Psoas muscle (tissue), 8 donors: ENCODE measurements at regions of chr3 and their contacts with region 1.

Region 1: DNA sequence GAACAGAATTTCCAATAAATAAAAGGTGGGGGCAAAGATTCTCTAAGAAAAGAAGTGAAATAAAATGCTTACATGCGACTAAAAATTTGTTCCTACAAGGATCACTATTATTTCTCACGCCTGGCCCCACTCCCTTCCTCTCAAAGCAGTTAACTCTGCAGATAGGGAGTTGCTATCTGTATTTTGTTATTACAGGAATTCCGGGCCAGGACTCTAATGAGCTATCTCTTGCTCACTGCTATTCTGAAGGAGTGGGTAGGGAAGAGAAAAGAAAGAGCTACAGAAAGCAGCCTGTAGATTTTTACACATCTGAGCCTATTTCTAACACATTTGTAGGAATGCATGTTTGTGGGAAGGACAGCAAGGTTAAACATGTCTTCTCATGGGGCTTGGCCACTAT is 140.4 kb downstream of the PCCB start:
- DNase-seq: no peak
- ATAC-seq: no peak
- H3K4me3 ChIP-seq: no peak overlapping the region
- H3K27ac ChIP-seq: no peak overlapping the region
- H3K4me1 ChIP-seq: no peaks in the 10 kb centered on the region
- H3K27me3 ChIP-seq: no peaks in the 10 kb centered on the region
- CTCF ChIP-seq: no peak

Region 2: GRCh38 chr3:136075218-136075808 is 315.3 kb before region 1 on chr3:
- intact Hi-C with region 1: loop called in 1 of 2 experiments (anchors 5 kb)
- DNase-seq: peak; percentile 57 to 69
- ATAC-seq: peak; percentile 84 to 88 (median 85)
- H3K4me3 ChIP-seq: peak overlapping the region; percentile 13
- H3K27ac ChIP-seq: peak overlapping the region; percentile 88
- H3K4me1 ChIP-seq: peaks cover 45% of the 10 kb centered on the region
- H3K27me3 ChIP-seq: no peaks in the 10 kb centered on the region
- CTCF ChIP-seq: peak; percentile 95

Region 3: DNA sequence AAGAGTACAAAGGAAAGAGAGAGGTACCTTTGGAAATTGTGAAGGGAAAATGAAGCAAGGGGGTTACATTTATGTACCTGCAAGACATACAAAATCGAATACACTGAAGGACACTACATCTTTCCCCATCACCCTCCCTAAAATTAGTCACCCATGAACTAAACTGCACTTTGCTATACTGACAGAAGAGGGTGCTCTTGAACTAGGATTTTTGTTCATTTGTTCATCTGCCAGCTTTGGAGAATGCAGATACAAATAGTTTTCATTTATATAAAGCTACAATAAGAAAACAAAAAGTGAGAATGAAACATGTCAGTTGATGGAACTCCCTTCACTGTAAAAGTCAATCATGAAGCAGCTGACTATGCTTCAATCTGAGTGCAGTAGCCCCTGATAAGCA is 84.7 kb before region 1 on chr3:
- intact Hi-C with region 1: no loop called
- DNase-seq: no peak
- ATAC-seq: no peak
- H3K4me3 ChIP-seq: no peak overlapping the region
- H3K27ac ChIP-seq: no peak overlapping the region
- H3K4me1 ChIP-seq: no peaks in the 10 kb centered on the region
- H3K27me3 ChIP-seq: no peaks in the 10 kb centered on the region
- CTCF ChIP-seq: no peak